Activated CD8-positive, alpha-beta memory T cell treated with anti-CD3 and anti-CD28 coated beads, Interleukin-2, amount 10 ng/mL, durations not matched to agents 7 days and 5 days (primary cell): ENCODE measurements at regions of chr4 and their contacts with region 1.

Region 1: DNA sequence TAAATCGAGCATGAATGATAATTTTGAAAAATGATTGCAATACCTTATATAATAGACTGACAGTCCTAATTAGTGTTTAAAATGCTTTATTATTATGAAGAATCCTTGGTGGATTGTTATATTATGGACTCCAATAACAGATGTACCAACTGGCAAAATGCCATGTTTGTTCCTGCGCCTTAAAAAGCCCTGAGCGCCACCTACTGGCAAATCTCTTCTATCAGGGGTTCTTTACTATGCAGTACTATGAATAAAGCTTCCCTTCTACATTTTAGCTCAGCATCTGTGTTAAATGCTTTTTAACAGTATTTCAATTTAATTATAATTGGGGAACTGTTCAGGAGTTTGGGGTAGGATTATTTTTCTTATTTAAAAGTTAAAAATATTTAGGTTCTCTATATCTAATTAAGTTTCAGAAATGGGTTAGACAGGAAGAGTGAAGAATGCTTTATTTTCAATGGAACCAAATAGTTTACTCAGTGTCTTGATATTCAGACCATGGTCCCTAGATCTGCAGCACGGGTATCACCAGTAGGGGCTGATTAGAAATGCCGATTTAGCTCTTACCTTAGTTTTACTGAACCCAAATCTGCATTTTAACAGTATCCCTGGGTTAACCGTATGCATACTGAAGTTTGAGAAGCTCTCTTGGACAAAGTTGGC is 20.1 kb downstream of the CFAP97 start:
- DNase-seq: peak; percentile 82
- ATAC-seq: peak; percentile 91
- H3K4me3 Mint-ChIP-seq: no peak overlapping the region
- H3K27ac Mint-ChIP-seq: no peak overlapping the region
- H3K4me1 Mint-ChIP-seq: peaks cover 26% of the 10 kb centered on the region
- H3K27me3 Mint-ChIP-seq: no peaks in the 10 kb centered on the region

Region 2: DNA sequence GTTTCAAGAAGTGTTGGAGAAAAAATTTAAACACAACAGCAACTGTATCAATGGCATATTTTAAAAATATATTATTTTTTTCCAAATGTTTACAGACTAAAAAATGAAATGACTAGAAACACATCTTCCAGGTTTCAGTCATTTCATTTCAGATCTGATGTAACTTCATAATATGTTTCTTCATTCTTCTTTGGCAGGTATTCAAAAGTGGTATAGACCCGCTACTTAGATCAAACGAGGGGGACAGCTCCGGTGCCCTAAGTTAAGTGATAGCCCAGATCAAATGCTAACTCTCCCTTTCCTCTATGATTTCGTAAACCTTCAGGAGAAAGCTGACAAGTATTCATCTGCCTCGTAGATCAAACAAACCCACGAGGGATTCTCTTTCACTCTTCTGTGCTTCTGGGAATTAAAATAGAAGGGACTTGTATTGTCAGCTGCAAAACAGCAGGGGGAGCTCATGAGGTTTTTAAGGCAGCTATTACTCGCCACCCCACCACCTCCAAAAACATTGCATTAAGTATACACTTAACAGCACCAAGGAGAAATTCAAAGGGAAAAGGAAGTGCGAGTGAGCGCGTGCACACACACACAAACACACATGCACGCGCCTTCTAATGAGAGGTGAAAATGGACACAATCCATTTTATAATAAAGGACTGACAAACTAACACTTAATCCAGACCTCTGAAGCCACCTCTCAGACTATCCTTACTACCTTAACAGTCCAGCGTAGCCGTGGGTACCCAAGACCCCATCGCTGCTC is 144.1 kb before region 1 on chr4:
- CTCF ChIA-PET with region 1: interaction called, 13 read pairs
- DNase-seq: peak; percentile 62
- ATAC-seq: peak; percentile 80
- H3K4me3 Mint-ChIP-seq: peak overlapping the region; percentile 40
- H3K27ac Mint-ChIP-seq: no peak overlapping the region
- H3K4me1 Mint-ChIP-seq: peaks cover 6% of the 10 kb centered on the region
- H3K27me3 Mint-ChIP-seq: peaks cover 36% of the 10 kb centered on the region

Region 3: GRCh38 chr4:185142912-185143595 is 40.7 kb before region 1 on chr4 and contains the start of gene SLC25A4:
- CTCF ChIA-PET with region 1: interaction called, 17 read pairs
- DNase-seq: peak; percentile 84
- ATAC-seq: peak; percentile 95
- H3K4me3 Mint-ChIP-seq: peak within 1 kb of the TSS; percentile 73
- H3K27ac Mint-ChIP-seq: no peak within 1 kb of the TSS
- H3K4me1 Mint-ChIP-seq: peaks cover 12% of the 10 kb centered on the region
- H3K27me3 Mint-ChIP-seq: peaks cover 29% of the 10 kb centered on the region
- total RNA-seq, gene SLC25A4: 5.8 to 6.4 TPM

Region 4: GRCh38 chr4:185165605-185166063 is 18.1 kb before region 1 on chr4:
- CTCF ChIA-PET with region 1: interaction called, 13 read pairs
- DNase-seq: no peak
- ATAC-seq: peak; percentile 80
- H3K4me3 Mint-ChIP-seq: peak overlapping the region; percentile 9
- H3K27ac Mint-ChIP-seq: peak overlapping the region; percentile 59
- H3K4me1 Mint-ChIP-seq: peaks cover 12% of the 10 kb centered on the region
- H3K27me3 Mint-ChIP-seq: no peaks in the 10 kb centered on the region

Region 5: GRCh38 chr4:185171373-185172071 is 12.2 kb before region 1 on chr4:
- CTCF ChIA-PET with region 1: interaction called, 21 read pairs
- DNase-seq: no peak
- ATAC-seq: no peak
- H3K4me3 Mint-ChIP-seq: no peak overlapping the region
- H3K27ac Mint-ChIP-seq: no peak overlapping the region
- H3K4me1 Mint-ChIP-seq: no peaks in the 10 kb centered on the region
- H3K27me3 Mint-ChIP-seq: no peaks in the 10 kb centered on the region

Region 6: DNA sequence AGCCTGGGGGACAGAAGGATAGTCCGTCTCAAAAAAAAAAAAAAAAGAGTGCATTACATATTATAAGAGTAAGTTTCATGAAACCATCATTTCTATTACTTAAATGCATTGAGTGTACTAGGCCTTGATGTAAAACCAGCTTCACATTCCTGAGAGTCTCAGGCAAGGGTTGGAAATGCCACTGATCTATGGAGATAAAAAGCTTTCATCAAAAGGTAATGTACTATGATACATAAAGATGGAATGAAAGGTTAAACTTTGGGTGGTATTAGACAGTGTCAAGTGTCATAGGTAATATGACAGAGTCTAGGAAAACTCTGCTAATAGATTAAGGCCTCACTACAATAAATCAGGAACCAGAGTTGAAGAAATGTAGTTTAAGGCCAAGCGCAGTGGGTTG is 12.7 kb after region 1 on chr4:
- CTCF ChIA-PET with region 1: interaction called, 17 read pairs
- DNase-seq: no peak
- ATAC-seq: no peak
- H3K4me3 Mint-ChIP-seq: no peak overlapping the region
- H3K27ac Mint-ChIP-seq: no peak overlapping the region
- H3K4me1 Mint-ChIP-seq: peaks cover 24% of the 10 kb centered on the region
- H3K27me3 Mint-ChIP-seq: no peaks in the 10 kb centered on the region

Region 7: DNA sequence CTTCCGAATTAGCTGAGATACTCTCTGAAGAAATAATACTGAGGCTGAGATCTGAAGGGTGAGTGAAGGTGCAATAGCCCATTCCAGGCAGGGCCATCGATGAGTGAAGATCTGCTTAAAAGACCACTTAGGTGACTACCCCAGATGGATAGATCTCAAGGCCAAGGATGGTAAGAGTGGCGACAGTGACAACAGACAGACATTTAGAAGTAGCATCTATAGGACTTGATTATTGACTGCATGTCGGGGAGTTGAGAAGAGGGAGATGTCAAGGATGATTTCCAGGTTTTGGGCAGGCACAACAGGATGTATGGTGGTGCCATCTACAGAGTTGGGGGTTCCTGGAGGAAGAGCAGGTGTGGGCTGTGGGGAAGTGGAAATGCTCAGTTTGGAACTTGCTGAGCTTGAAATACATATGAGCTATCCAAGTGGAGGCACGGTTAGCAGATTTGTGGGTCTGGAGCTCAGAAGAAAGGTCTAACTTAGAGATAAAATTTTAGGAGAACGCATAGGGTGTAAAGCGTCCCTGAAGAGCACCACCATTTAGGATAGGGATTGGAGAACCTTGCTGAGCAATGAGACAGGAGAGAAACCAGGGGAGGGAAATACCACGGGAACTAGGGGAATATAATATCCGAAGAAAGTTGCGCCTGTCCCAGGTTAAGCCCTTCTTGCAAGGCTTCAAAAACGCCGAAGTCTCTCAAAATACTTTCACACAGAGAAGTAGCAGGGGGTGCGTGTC is 241.3 kb after region 1 on chr4:
- CTCF ChIA-PET with region 1: no interaction called
- DNase-seq: no peak
- ATAC-seq: no peak
- H3K4me3 Mint-ChIP-seq: peak overlapping the region; percentile 83
- H3K27ac Mint-ChIP-seq: peak overlapping the region; percentile 97
- H3K4me1 Mint-ChIP-seq: peaks cover 25% of the 10 kb centered on the region
- H3K27me3 Mint-ChIP-seq: peaks cover 4% of the 10 kb centered on the region